H1 (cell line): ENCODE measurements at regions of chr6 and their contacts with region 1.

Region 1: DNA sequence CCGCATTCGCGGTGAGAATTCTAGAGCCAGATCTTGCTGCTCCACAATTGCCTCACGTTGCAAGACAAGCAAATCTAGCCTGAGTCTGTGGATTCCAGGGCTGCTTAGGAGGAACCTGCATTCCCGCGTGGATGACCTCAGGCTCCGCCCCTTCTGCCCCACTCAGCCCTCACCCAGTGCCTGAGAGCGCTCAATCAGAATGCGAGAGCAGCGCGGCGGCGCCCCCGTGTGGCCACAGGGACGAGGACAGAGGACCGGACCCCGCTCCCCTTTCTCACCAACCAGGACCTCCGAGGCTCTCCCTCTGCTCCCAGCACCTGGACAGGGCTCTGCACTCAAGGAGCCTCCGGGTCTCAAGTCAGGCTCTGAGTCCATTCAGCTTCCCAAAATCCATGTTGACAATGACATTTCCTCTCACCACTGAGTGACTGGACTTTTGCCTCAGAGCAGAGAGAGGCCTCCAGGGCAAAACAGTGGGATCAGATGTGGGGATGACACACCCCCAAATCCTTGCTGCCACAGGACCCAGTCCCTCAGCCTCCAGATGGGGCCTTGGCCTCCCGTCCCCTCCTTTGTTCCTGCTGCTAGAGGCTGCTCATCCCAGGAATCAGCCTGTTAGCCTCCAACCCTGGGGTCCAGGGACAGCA is 52.0 kb downstream of the RPP21 start:
- DNase-seq: peak; percentile 53 to 99
- H3K4me3 ChIP-seq: peak overlapping the region in 1 of 4 experiments; percentile 21; a peak in 1 of 8 replicates
- H3K27ac ChIP-seq: no peak overlapping the region
- H3K4me1 ChIP-seq: no peaks in the 10 kb centered on the region
- H3K27me3 ChIP-seq: no peaks in the 10 kb centered on the region
- CTCF ChIP-seq: peak; percentile 93 to 96 (median 95)
- EP300 ChIP-seq: no peak
- POLR2A ChIP-seq: no peak
- RAD21 ChIP-seq: peak; percentile 86 to 90

Region 2: GRCh38 chr6:30154709-30155519 is 242.0 kb before region 1 on chr6:
- CTCF ChIA-PET with region 1: no interaction called
- POLR2A ChIA-PET with region 1: no interaction called
- DNase-seq: no peak
- H3K4me3 ChIP-seq: no peak overlapping the region
- H3K27ac ChIP-seq: no peak overlapping the region
- H3K4me1 ChIP-seq: no peaks in the 10 kb centered on the region
- H3K27me3 ChIP-seq: peaks cover 0 to 4% (median 1%) of the 10 kb centered on the region in 4 experiments; a peak in 4 of 7 replicates
- CTCF ChIP-seq: no peak
- EP300 ChIP-seq: no peak
- POLR2A ChIP-seq: no peak
- RAD21 ChIP-seq: no peak

Region 3: GRCh38 chr6:30219244-30219643 is 177.7 kb before region 1 on chr6:
- CTCF ChIA-PET with region 1: interaction called, 27 read pairs
- POLR2A ChIA-PET with region 1: no interaction called
- DNase-seq: peak in 1 of 2 experiments; percentile 59
- H3K4me3 ChIP-seq: no peak overlapping the region
- H3K27ac ChIP-seq: no peak overlapping the region
- H3K4me1 ChIP-seq: peaks cover 0 to under 1% (median 0%) of the 10 kb centered on the region in 4 experiments; a peak in 1 of 7 replicates
- H3K27me3 ChIP-seq: no peaks in the 10 kb centered on the region; a peak in 1 of 7 replicates
- CTCF ChIP-seq: peak; percentile 42 to 89 (median 76)
- EP300 ChIP-seq: no peak
- POLR2A ChIP-seq: no peak
- RAD21 ChIP-seq: peak; percentile 80 to 86

Region 4: GRCh38 chr6:30238174-30238795 is 158.7 kb before region 1 on chr6:
- CTCF ChIA-PET with region 1: interaction called, 25 read pairs
- POLR2A ChIA-PET with region 1: no interaction called
- DNase-seq: no peak
- H3K4me3 ChIP-seq: no peak overlapping the region
- H3K27ac ChIP-seq: no peak overlapping the region
- H3K4me1 ChIP-seq: no peaks in the 10 kb centered on the region
- H3K27me3 ChIP-seq: no peaks in the 10 kb centered on the region
- CTCF ChIP-seq: peak in 2 of 3 experiments; percentile 48 to 68; a peak in 3 of 4 replicates
- EP300 ChIP-seq: no peak
- POLR2A ChIP-seq: no peak
- RAD21 ChIP-seq: peak; percentile 75 to 80

Region 5: DNA sequence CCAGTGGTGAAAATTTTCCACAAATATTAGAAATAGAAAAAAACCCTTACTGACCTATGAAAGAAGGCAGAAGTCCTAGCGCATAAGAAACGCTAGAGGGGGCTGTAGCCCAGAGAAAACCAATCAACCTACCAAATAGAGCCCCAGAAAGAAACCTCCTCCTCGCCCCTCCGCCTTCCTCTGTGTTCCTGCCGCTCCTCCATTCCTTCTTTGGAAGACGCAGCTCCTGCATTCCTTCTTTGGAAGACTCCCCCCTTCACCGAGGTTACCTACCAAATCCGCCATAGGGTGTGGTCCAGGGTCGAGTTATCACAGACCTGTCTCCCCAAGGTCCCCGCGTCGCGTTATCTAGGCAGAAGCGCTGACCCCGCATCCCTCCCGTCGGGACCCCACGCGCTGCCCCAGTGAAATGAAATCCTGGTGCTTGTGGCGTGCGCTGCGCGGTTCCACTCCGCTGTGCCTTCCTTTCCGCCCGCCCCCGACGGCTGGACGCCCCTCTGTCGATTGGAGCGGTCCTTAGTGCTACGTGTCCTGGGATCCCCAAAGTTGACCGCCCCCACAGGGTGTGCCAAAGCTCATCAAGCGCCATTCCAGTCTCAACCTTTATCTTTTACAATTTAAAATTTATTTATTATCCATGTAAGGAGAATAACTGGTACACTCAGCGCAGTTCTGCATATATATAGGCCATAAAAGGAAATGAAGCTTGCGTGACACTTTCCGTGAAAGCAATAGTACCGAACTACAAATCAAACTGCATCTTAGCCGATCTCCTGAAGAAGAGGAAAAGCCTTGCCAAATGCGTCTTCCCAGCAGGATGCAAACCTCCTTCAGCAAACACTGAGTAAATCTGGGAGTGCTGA is 39.0 kb before region 1 on chr6:
- CTCF ChIA-PET with region 1: interaction called, 32 read pairs
- POLR2A ChIA-PET with region 1: interaction called, 7 read pairs
- DNase-seq: peak; percentile 71 to 79
- H3K4me3 ChIP-seq: peak overlapping the region; percentile 51 to 80 (median 76)
- H3K27ac ChIP-seq: no peak overlapping the region
- H3K4me1 ChIP-seq: peaks cover 0 to 6% (median 2%) of the 10 kb centered on the region in 4 experiments; a peak in 4 of 7 replicates
- H3K27me3 ChIP-seq: peaks cover 0 to 4% (median 2%) of the 10 kb centered on the region in 4 experiments; a peak in 3 of 7 replicates
- CTCF ChIP-seq: peak in 2 of 3 experiments; percentile 73 to 80; a peak in 3 of 4 replicates
- EP300 ChIP-seq: no peak
- POLR2A ChIP-seq: peak in 1 of 2 experiments; percentile 36; a peak in 2 of 3 replicates
- RAD21 ChIP-seq: peak; percentile 78 to 79

Region 6: DNA sequence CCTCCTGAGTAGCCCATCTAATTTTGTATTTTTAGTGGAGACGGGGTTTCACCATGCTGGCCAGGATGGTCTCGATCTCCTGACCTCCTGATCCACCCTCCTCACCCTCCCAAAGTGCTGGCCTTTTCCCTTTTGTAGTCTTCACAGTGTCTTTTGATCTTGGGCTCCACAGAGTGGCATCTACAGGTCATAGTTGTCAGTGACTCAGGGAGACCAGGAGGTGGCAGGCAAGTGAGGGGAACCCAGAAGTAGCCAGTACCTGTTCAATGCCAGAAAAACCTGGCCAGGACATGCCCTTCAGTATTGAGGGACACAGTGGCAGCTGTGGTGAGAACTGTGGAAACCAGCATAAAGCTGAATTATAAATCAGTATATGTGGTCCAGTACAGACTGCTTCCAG is 32.4 kb before region 1 on chr6:
- CTCF ChIA-PET with region 1: interaction called, 32 read pairs
- POLR2A ChIA-PET with region 1: interaction called, 4 read pairs
- DNase-seq: no peak
- H3K4me3 ChIP-seq: no peak overlapping the region
- H3K27ac ChIP-seq: no peak overlapping the region
- H3K4me1 ChIP-seq: peaks cover 0 to 3% (median 0%) of the 10 kb centered on the region in 4 experiments; a peak in 1 of 7 replicates
- H3K27me3 ChIP-seq: peaks cover 0 to 4% (median 1%) of the 10 kb centered on the region in 4 experiments; a peak in 2 of 7 replicates
- CTCF ChIP-seq: peak; percentile 48 to 68 (median 55)
- EP300 ChIP-seq: no peak
- POLR2A ChIP-seq: no peak
- RAD21 ChIP-seq: peak; percentile 44 to 61

Region 7: GRCh38 chr6:30378290-30378937 is 18.5 kb before region 1 on chr6:
- CTCF ChIA-PET with region 1: interaction called, 18 read pairs
- POLR2A ChIA-PET with region 1: no interaction called
- DNase-seq: no peak
- H3K4me3 ChIP-seq: no peak overlapping the region
- H3K27ac ChIP-seq: no peak overlapping the region
- H3K4me1 ChIP-seq: no peaks in the 10 kb centered on the region
- H3K27me3 ChIP-seq: no peaks in the 10 kb centered on the region
- CTCF ChIP-seq: no peak
- EP300 ChIP-seq: no peak
- POLR2A ChIP-seq: no peak
- RAD21 ChIP-seq: no peak

Region 8: GRCh38 chr6:30386166-30386565 is 10.8 kb before region 1 on chr6:
- CTCF ChIA-PET with region 1: interaction called, 10 read pairs
- POLR2A ChIA-PET with region 1: no interaction called
- DNase-seq: no peak
- H3K4me3 ChIP-seq: no peak overlapping the region
- H3K27ac ChIP-seq: no peak overlapping the region
- H3K4me1 ChIP-seq: peaks cover 0 to 1% (median 0%) of the 10 kb centered on the region in 4 experiments; a peak in 2 of 7 replicates
- H3K27me3 ChIP-seq: peaks cover 0 to 5% (median 0%) of the 10 kb centered on the region in 4 experiments; a peak in 2 of 7 replicates
- CTCF ChIP-seq: no peak
- EP300 ChIP-seq: no peak
- POLR2A ChIP-seq: no peak
- RAD21 ChIP-seq: no peak